ENCODE measurements at regions of chr7 and their contacts with region 1.

Region 1: DNA sequence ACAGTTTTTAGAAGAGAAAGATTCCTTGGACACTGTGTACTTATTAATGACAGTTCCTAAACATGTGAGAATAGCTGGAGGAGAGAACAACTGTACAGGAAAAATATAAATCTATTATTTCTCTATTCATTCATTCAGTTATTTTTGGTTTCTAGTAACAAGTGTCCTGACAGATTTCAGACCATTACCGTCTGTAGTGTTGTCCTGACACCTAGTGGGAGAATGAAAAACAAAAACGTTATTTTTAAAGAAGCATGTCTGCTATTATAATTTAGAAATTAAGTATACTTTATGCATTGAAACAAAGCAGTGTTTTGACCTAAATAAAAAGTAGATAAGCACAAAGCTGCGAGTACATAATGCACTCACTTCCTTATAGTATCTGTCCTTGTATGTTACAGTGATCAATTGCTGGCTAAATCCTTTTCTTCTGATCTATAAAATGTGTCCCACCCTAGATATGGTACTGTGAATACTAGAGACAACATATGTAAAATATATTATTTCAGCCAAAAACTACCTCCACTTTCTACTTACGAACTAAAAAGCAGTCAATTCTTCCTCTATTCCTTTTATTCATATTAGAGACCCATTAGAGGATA is 575.6 kb downstream of the ARL4A start:
- DNase-seq: peak in 4 of 5 donors; percentile 40 to 47 (median 46)
- H3K4me3 ChIP-seq: no peak overlapping the region
- H3K4me3 Mint-ChIP-seq: no peak overlapping the region
- H3K27ac ChIP-seq: no peak overlapping the region
- H3K27ac Mint-ChIP-seq: no peak overlapping the region
- H3K4me1 ChIP-seq: no peaks in the 10 kb centered on the region
- H3K4me1 Mint-ChIP-seq: no peaks in the 10 kb centered on the region
- H3K27me3 ChIP-seq: no peaks in the 10 kb centered on the region
- H3K27me3 Mint-ChIP-seq: peaks cover 5 to 7% of the 10 kb centered on the region in 2 donors

Region 2: DNA sequence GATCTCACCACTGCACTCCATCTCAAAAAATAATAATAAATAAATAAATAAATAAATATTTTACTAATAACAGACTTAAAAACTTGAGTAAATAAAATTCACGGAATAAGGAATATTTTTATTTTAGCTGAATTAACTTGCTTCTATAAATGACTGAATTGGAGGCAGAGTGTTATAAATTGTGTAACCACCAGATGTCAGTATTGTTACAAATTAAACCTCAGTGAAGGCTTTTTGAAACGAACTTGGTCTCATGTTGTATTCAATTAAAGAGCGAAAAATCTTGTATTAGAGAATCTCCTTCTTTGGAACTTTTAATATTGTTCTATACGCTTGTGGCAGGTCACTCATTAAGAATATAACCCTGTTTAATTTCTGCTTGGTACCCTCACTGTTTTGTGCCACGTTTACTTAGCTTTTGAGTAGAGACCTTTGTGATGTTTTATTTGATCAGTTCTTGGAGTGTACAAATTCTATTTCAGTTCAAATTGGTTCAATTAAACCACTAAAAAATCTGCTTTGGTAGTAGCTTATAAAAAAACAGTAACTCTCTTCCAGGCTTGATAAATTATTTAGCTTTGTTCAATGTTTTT is 738.1 kb before region 1 on chr7:
- CTCF ChIA-PET with region 1: interaction called, 11 read pairs
- POLR2A ChIA-PET with region 1: no interaction called
- intact Hi-C with region 1: loop called (anchors 1 kb)
- DNase-seq: peak in 4 of 5 donors; percentile 27 to 41 (median 33)
- H3K4me3 ChIP-seq: no peak overlapping the region
- H3K4me3 Mint-ChIP-seq: no peak overlapping the region
- H3K27ac ChIP-seq: no peak overlapping the region
- H3K27ac Mint-ChIP-seq: no peak overlapping the region
- H3K4me1 ChIP-seq: no peaks in the 10 kb centered on the region
- H3K4me1 Mint-ChIP-seq: peaks cover 0 to 1% (median 0%) of the 10 kb centered on the region in 4 donors
- H3K27me3 ChIP-seq: peaks cover 5% of the 10 kb centered on the region
- H3K27me3 Mint-ChIP-seq: peaks cover 13 to 20% of the 10 kb centered on the region in 2 donors

Region 3: GRCh38 chr7:12674849-12675248 is 588.2 kb before region 1 on chr7:
- CTCF ChIA-PET with region 1: interaction called, 30 read pairs
- POLR2A ChIA-PET with region 1: no interaction called
- intact Hi-C with region 1: loop called (anchors 1 kb)
- DNase-seq: peak; percentile 68 to 80 (median 70)
- H3K4me3 ChIP-seq: no peak overlapping the region
- H3K4me3 Mint-ChIP-seq: peak overlapping the region in 5 of 8 donors; percentile 4 to 24 (median 14)
- H3K27ac ChIP-seq: no peak overlapping the region
- H3K27ac Mint-ChIP-seq: peak overlapping the region; percentile 6 to 80 (median 67)
- H3K4me1 ChIP-seq: peaks cover 8% of the 10 kb centered on the region
- H3K4me1 Mint-ChIP-seq: peaks cover 11 to 19% (median 15%) of the 10 kb centered on the region in 4 donors
- H3K27me3 ChIP-seq: no peaks in the 10 kb centered on the region
- H3K27me3 Mint-ChIP-seq: no peaks in the 10 kb centered on the region

Region 4: GRCh38 chr7:13169356-13169755 is 93.7 kb before region 1 on chr7:
- CTCF ChIA-PET with region 1: no interaction called
- POLR2A ChIA-PET with region 1: no interaction called
- intact Hi-C with region 1: no loop called
- DNase-seq: no peak
- H3K4me3 ChIP-seq: no peak overlapping the region
- H3K4me3 Mint-ChIP-seq: no peak overlapping the region
- H3K27ac ChIP-seq: no peak overlapping the region
- H3K27ac Mint-ChIP-seq: no peak overlapping the region
- H3K4me1 ChIP-seq: no peaks in the 10 kb centered on the region
- H3K4me1 Mint-ChIP-seq: no peaks in the 10 kb centered on the region
- H3K27me3 ChIP-seq: no peaks in the 10 kb centered on the region
- H3K27me3 Mint-ChIP-seq: peaks cover 8 to 12% of the 10 kb centered on the region in 2 donors

Region 5: GRCh38 chr7:13879994-13880686 is 617.1 kb after region 1 on chr7:
- CTCF ChIA-PET with region 1: no interaction called
- POLR2A ChIA-PET with region 1: no interaction called
- intact Hi-C with region 1: no loop called
- DNase-seq: no peak
- H3K4me3 ChIP-seq: no peak overlapping the region
- H3K4me3 Mint-ChIP-seq: no peak overlapping the region
- H3K27ac ChIP-seq: no peak overlapping the region
- H3K27ac Mint-ChIP-seq: no peak overlapping the region
- H3K4me1 ChIP-seq: peaks cover 4% of the 10 kb centered on the region
- H3K4me1 Mint-ChIP-seq: peaks cover 3 to 6% (median 4%) of the 10 kb centered on the region in 4 donors
- H3K27me3 ChIP-seq: no peaks in the 10 kb centered on the region
- H3K27me3 Mint-ChIP-seq: no peaks in the 10 kb centered on the region